Mammary epithelial cell (primary cell): ENCODE measurements at regions of chr9 and their contacts with region 1.

Region 1: GRCh38 chr9:94213511-94214124 is 45.5 kb upstream of the ZNF169 start:
- DNase-seq: peak; percentile 49
- H3K4me3 ChIP-seq: no peak overlapping the region
- H3K27ac ChIP-seq: no peak overlapping the region
- H3K4me1 ChIP-seq: peaks cover 6% of the 10 kb centered on the region
- H3K27me3 ChIP-seq: no peaks in the 10 kb centered on the region
- CTCF ChIP-seq: peak; percentile 64 to 80

Region 2: DNA sequence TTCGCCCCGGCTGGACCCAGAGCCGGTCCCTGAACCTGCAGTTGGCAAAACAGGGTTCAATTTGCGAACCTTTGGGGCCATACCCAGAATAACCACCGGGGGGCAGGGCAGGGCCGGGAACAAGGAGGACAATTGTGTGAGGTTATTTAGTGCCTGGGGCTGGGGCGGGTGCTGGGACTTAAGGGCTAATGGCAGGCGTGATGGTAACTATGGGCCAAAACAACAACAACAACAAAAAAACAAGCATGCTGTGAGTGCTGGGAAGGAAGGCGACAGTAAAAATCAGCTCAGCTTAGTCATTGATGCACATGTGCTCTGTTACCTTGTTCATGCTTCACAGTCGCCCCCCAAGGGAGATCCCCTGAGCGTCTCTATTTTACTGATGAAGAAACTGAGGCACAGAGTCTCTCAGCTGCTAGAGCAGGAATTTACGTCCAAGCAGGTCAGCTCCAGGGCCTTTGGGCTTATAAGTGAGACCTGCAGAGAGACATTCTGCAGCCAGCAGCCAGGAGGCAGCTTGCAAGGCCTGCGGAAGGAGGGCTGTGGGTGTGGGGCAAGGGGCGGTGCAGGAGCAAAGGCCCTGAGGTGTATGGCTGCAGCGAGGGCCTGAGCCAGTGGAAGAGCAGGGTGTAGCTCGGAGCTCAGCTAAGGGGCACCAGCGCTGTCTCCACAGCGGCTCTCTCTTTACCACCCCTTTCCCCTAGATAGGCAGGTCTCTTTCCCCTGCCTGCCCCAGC is 531.2 kb before region 1 on chr9:
- CTCF ChIA-PET with region 1: no interaction called
- dilution Hi-C with region 1: no loop called
- in situ Hi-C with region 1: loop called (anchors 25 kb)
- intact Hi-C with region 1: loop called (anchors 2 kb)
- DNase-seq: peak; percentile 25
- H3K4me3 ChIP-seq: no peak overlapping the region
- H3K27ac ChIP-seq: no peak overlapping the region
- H3K4me1 ChIP-seq: no peaks in the 10 kb centered on the region
- H3K27me3 ChIP-seq: no peaks in the 10 kb centered on the region
- CTCF ChIP-seq: peak; percentile 69 to 82

Region 3: DNA sequence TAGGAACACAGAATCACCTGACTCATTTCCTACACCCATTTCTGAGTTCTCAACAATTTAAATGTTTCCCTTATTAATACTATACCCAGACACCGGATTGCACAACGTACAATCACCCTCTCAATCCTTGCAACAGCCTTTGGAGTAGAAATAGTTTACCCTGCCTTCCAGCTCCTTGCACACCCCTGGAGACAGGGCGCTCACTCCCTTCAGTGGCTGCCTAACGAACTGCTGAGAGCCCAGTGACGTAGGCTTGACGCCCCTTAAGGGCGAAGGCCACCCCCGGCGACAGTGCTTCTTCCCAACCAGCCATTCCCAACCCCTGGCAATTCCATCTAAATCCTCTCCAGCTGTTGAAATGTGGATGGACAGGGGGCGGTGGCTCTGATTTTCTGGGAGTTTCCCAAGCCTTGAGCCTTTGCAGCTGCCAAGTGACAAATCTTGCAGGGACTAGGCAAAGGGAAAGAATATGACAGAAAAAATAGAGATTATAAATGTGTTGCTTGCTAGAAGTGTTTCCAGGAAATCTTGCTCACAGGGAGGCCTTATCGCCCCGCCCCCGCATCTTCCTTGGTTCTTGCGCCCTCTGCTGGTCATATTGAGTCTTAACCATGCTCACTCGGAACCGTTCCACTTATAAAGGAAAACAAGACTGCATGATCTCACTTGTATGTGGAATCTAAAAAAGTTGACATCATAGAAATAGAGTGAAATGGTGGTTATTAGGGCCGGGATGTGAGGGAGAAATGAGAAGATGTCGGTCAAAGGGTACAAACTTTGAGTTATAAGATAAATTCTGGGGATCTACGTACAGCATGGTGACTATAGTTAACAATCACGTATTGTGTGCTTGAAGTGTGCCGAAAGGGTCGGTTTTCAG is 250.8 kb before region 1 on chr9:
- CTCF ChIA-PET with region 1: interaction called, 3 read pairs
- dilution Hi-C with region 1: no loop called
- in situ Hi-C with region 1: no loop called
- intact Hi-C with region 1: loop called (anchors 1 kb)
- DNase-seq: peak; percentile 61
- H3K4me3 ChIP-seq: no peak overlapping the region
- H3K27ac ChIP-seq: no peak overlapping the region
- H3K4me1 ChIP-seq: peaks cover 5% of the 10 kb centered on the region
- H3K27me3 ChIP-seq: peaks cover 28% of the 10 kb centered on the region
- CTCF ChIP-seq: peak; percentile 77 to 79

Region 4: GRCh38 chr9:94014065-94014654 is 199.5 kb before region 1 on chr9:
- CTCF ChIA-PET with region 1: interaction called, 14 read pairs
- dilution Hi-C with region 1: no loop called
- in situ Hi-C with region 1: loop called (anchors 10 kb)
- intact Hi-C with region 1: loop called (anchors 1 kb)
- DNase-seq: peak; percentile 24
- H3K4me3 ChIP-seq: no peak overlapping the region
- H3K27ac ChIP-seq: no peak overlapping the region
- H3K4me1 ChIP-seq: no peaks in the 10 kb centered on the region
- H3K27me3 ChIP-seq: no peaks in the 10 kb centered on the region
- CTCF ChIP-seq: peak; percentile 68 to 69

Region 5: GRCh38 chr9:94042516-94043360 is 170.9 kb before region 1 on chr9:
- CTCF ChIA-PET with region 1: no interaction called
- dilution Hi-C with region 1: no loop called
- in situ Hi-C with region 1: no loop called
- intact Hi-C with region 1: no loop called
- DNase-seq: no peak
- H3K4me3 ChIP-seq: no peak overlapping the region
- H3K27ac ChIP-seq: no peak overlapping the region
- H3K4me1 ChIP-seq: no peaks in the 10 kb centered on the region
- H3K27me3 ChIP-seq: no peaks in the 10 kb centered on the region
- CTCF ChIP-seq: no peak

Region 6: GRCh38 chr9:94065535-94065961 is 148.1 kb before region 1 on chr9:
- CTCF ChIA-PET with region 1: no interaction called
- dilution Hi-C with region 1: no loop called
- in situ Hi-C with region 1: loop called in 1 of 2 experiments (anchors 10 kb)
- intact Hi-C with region 1: loop called (anchors 1 kb)
- DNase-seq: peak; percentile 69
- H3K4me3 ChIP-seq: no peak overlapping the region
- H3K27ac ChIP-seq: no peak overlapping the region
- H3K4me1 ChIP-seq: peaks cover 3% of the 10 kb centered on the region
- H3K27me3 ChIP-seq: no peaks in the 10 kb centered on the region
- CTCF ChIP-seq: peak; percentile 86 to 87

Region 7: GRCh38 chr9:94076557-94076956 is 137.1 kb before region 1 on chr9:
- CTCF ChIA-PET with region 1: no interaction called
- dilution Hi-C with region 1: loop called (anchors 5 kb)
- in situ Hi-C with region 1: no loop called
- intact Hi-C with region 1: no loop called
- DNase-seq: no peak
- H3K4me3 ChIP-seq: no peak overlapping the region
- H3K27ac ChIP-seq: no peak overlapping the region
- H3K4me1 ChIP-seq: no peaks in the 10 kb centered on the region
- H3K27me3 ChIP-seq: no peaks in the 10 kb centered on the region
- CTCF ChIP-seq: no peak

Region 8: DNA sequence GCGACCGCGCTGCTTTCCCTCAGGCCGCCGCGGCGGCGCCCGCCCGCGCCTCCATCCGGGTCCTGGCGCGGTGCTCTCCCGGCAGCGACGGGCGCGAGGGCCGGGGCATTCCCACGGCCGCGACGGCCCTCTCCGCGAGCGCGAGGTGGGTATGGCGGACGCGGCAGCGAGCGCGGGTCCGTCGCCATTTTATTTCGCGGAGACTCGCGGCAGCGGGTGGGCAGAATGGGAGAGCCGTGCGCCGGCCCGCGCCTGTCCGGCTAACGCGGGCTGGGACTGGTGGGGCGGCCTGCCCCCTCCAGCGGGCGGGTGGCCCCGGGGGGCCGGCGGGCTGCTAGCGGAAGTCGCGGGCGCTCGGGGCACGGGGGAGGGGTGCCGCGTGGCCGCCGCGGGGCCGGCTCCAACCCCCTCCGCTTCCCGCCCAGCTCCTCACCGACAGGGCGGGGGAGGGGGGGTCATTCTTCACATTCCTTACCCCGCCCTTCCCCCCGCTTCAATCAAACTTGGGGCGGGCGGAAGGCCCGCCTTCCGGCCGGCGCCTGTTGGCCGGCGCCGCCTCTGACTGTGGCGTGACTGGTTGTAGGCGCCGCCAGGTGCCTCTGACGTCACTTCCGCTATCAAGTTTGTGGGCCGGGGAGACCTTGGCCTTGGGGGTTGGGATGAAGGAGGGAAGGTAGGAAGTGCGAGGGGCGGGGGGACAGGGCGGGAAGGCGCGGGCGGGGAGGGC is 47.2 kb before region 1 on chr9:
- CTCF ChIA-PET with region 1: no interaction called
- dilution Hi-C with region 1: no loop called
- in situ Hi-C with region 1: no loop called
- intact Hi-C with region 1: loop called (anchors 1 kb)
- DNase-seq: peak; percentile 98
- H3K4me3 ChIP-seq: peak overlapping the region; percentile 68 to 98 (median 90)
- H3K27ac ChIP-seq: peak overlapping the region; percentile 96
- H3K4me1 ChIP-seq: peaks cover 13% of the 10 kb centered on the region
- H3K27me3 ChIP-seq: no peaks in the 10 kb centered on the region
- CTCF ChIP-seq: no peak

Region 9: GRCh38 chr9:94250456-94250855 is 36.8 kb after region 1 on chr9:
- CTCF ChIA-PET with region 1: no interaction called
- dilution Hi-C with region 1: no loop called
- in situ Hi-C with region 1: no loop called
- intact Hi-C with region 1: no loop called
- DNase-seq: peak; percentile 17
- H3K4me3 ChIP-seq: no peak overlapping the region
- H3K27ac ChIP-seq: no peak overlapping the region
- H3K4me1 ChIP-seq: no peaks in the 10 kb centered on the region
- H3K27me3 ChIP-seq: no peaks in the 10 kb centered on the region
- CTCF ChIP-seq: no peak